HAP-1 (cell line): ENCODE measurements at regions of chr3 and their contacts with region 1.

Region 1: GRCh38 chr3:133661454-133662277 is at the start of gene TOPBP1:
- DNase-seq: peak; percentile 89 to 90
- H3K4me3 ChIP-seq: peak within 1 kb of the TSS; percentile 78
- H3K4me1 ChIP-seq: peaks cover 25% of the 10 kb centered on the region
- H3K27me3 ChIP-seq: no peaks in the 10 kb centered on the region

Region 2: DNA sequence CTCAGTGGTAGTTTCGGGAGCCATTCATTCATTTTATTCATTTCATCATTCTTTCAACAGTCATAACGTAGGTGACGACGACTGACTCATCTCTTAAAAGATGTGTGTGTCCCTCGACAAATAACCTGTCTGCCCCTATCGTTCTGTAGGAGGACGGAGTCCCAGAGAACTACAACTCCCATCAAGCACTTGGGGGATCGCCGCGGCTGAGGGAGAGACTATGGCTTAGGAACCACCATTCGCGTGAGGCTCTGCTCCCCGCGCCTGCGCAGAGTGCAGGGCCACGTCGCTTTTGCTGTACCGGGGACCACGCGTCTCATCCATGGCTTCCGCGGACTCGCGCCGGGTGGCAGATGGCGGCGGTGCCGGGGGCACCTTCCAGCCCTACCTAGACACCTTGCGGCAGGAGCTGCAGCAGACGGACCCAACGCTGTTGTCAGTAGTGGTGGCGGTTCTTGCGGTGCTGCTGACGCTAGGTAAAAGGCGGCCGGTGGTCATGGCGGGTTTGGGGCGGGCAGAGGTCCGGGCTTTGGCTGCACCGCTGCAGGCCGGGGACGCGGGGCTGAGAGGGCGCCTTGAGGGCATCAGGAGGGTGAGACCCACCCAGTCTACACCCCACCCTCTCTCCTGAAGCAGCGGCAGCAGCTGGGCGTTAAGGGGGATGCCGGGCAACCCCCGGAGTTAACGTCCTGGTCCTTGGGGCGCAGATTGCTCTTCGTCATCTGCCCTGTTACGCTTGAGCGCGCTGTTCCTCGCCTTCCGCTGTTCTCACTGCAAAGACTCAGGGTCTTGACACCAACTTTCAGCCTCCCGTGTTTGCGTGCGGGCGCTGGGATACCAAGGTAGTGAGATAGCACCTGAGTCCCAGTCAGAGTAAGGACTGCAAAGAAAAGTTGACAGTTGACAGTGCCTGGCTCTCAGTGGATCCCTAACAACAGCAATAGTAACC is 144.1 kb after region 1 on chr3 and contains the start of gene SRPRB:
- in situ Hi-C with region 1: loop called (anchors 10 kb)
- DNase-seq: peak; percentile 93 to 94
- H3K4me3 ChIP-seq: peak within 1 kb of the TSS; percentile 88
- H3K4me1 ChIP-seq: peaks cover 5% of the 10 kb centered on the region
- H3K27me3 ChIP-seq: no peaks in the 10 kb centered on the region

Region 3: DNA sequence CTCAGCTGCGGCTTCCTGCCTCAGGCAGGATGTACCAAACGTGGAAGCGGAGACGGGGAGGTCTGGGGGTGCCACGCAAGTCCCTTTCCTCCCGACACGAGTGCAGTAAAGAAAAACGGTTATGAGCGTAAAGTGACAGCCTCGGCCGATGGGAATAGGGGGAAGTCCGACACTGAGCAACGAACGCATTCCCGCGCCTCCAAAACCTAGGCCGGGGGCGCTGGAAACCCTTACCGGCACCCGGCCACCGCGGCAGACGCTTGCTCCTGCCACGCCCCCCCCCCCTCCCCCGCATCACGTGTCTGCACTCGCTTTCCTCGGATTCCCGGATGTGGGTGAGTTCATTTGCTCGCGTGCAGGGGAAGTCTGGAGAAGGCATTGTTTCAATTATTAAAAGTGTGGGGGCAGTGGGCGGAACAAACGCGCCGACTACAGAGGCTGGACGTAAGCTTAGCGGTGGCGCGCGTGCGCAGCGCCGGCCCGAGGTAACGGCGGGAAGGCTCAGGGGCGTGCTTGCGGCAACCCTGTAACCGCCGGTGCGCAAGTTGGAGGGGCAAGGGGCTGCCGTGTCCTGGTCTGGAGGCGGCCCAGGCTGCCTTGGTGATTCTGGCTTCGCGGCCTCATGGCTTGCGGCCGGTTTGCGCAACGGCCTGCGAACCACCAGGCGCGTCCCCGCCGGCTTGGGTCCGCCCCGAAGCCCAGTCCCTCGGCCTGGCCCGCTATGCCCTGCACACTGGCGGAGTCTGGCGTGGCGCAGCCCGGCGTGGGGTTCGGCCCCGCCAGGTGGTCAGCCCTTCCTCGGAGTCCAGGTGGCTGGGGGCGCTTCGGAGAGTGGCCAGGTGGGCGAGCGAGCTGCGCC is 824.3 kb after region 1 on chr3 and contains the starts of genes ANAPC13 and CEP63:
- in situ Hi-C with region 1: loop called (anchors 25 kb)
- DNase-seq: peak; percentile 96 to 98
- H3K4me3 ChIP-seq: peak within 1 kb of the TSS; percentile 75
- H3K4me1 ChIP-seq: peaks cover 8% of the 10 kb centered on the region
- H3K27me3 ChIP-seq: 0 out of 2 replicates have a peak, but pooled peaks cover 1% of the 10 kb centered on the region